Activated CD4-positive, alpha-beta T cell treated with anti-CD3 and anti-CD28 coated beads, Interleukin-2, amount 10 ng/mL, durations not matched to agents 24 days and 14 days (primary cell): ENCODE measurements at regions of chr3 and their contacts with region 1.

Region 1: GRCh38 chr3:190321789-190322603 is at the start of gene CLDN1:
- DNase-seq: peak; percentile 93
- H3K4me3 Mint-ChIP-seq: peak within 1 kb of the TSS; percentile 75
- H3K27ac Mint-ChIP-seq: no peak within 1 kb of the TSS
- H3K4me1 Mint-ChIP-seq: peaks cover 31% of the 10 kb centered on the region
- H3K27me3 Mint-ChIP-seq: peaks cover 22% of the 10 kb centered on the region
- total RNA-seq, gene CLDN1: 0.33 and 0.52 TPM in 2 replicates

Region 2: GRCh38 chr3:190224863-190225692 is 96.9 kb before region 1 on chr3:
- intact Hi-C with region 1: loop called (anchors 2 kb)
- DNase-seq: no peak
- H3K4me3 Mint-ChIP-seq: no peak overlapping the region
- H3K27ac Mint-ChIP-seq: no peak overlapping the region
- H3K4me1 Mint-ChIP-seq: peaks cover 2% of the 10 kb centered on the region
- H3K27me3 Mint-ChIP-seq: peaks cover 4% of the 10 kb centered on the region

Region 3: DNA sequence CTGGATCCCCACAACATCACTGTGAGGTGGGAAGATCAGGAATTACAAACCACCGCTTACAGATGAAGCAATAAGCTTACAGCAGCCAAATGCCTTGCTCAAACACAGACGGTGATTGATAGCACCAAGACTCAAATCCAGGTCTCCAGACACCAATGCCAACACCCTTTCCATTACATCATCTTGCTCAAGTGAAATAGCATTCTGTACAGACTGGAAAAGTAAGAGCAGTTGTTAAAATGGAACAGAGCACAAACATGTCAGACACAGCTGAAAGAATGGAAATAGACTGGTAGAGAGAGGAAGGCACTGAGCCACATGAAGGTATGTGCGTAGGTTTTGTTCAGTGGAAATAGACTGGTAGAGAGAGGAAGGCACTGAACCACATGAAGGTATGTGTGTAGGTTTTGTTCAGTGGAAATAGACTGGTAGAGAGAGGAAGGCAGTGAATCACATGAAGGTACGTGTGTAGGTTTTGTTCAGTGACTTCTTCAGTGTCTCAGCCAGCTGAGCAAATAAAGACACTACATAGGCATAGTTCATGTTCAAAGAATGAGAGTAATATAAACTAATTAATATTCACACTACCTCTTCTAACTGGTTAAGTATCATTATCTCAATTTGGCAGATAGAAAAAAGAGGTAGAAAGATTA is 15.4 kb before region 1 on chr3:
- intact Hi-C with region 1: loop called (anchors 1 kb)
- DNase-seq: peak; percentile 63
- H3K4me3 Mint-ChIP-seq: peak overlapping the region; percentile 19
- H3K27ac Mint-ChIP-seq: peak overlapping the region; percentile 71
- H3K4me1 Mint-ChIP-seq: peaks cover 19% of the 10 kb centered on the region
- H3K27me3 Mint-ChIP-seq: no peaks in the 10 kb centered on the region

Region 4: GRCh38 chr3:190446492-190447279 is 124.7 kb after region 1 on chr3:
- intact Hi-C with region 1: no loop called
- DNase-seq: no peak
- H3K4me3 Mint-ChIP-seq: peak overlapping the region; percentile 5
- H3K27ac Mint-ChIP-seq: no peak overlapping the region
- H3K4me1 Mint-ChIP-seq: peaks cover 8% of the 10 kb centered on the region
- H3K27me3 Mint-ChIP-seq: peaks cover 20% of the 10 kb centered on the region

Region 5: DNA sequence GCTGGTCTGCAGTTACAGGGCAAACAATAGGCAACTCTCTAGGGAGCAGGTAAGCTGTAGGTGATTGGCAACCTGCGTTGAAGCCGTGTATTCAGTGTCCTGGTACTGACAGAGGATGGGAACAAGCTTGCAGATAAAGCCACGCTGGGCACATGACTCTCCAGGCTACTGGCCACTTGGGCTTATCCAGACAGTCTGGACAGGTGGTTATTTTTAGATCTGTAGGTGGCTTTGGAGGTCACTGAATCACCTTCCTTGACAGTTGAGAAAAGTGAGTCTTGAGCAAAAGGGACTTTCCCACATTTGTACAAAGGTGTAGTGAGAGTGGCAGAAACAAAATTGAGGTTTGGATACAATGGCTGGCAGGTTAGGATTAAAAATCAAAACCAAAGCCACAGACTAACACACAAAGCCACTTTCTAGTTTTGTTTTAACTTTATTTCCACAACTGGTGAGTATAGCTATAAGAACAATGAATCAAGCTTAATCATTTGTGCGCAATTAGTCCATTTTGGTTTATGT is 169.6 kb after region 1 on chr3:
- intact Hi-C with region 1: loop called (anchors 10 kb)
- DNase-seq: no peak
- H3K4me3 Mint-ChIP-seq: peak overlapping the region; percentile 11
- H3K27ac Mint-ChIP-seq: peak overlapping the region; percentile 12
- H3K4me1 Mint-ChIP-seq: peaks cover 22% of the 10 kb centered on the region
- H3K27me3 Mint-ChIP-seq: peaks cover 69% of the 10 kb centered on the region

Region 6: GRCh38 chr3:190721330-190721729 is 399.3 kb after region 1 on chr3:
- intact Hi-C with region 1: no loop called
- DNase-seq: no peak
- H3K4me3 Mint-ChIP-seq: no peak overlapping the region
- H3K27ac Mint-ChIP-seq: no peak overlapping the region
- H3K4me1 Mint-ChIP-seq: no peaks in the 10 kb centered on the region
- H3K27me3 Mint-ChIP-seq: peaks cover 9% of the 10 kb centered on the region

Region 7: GRCh38 chr3:191085091-191085490 is 763.1 kb after region 1 on chr3:
- intact Hi-C with region 1: no loop called
- DNase-seq: no peak
- H3K4me3 Mint-ChIP-seq: no peak overlapping the region
- H3K27ac Mint-ChIP-seq: no peak overlapping the region
- H3K4me1 Mint-ChIP-seq: no peaks in the 10 kb centered on the region
- H3K27me3 Mint-ChIP-seq: no peaks in the 10 kb centered on the region